ENCODE measurements at regions of chr4 and their contacts with region 1.

Region 1: GRCh38 chr4:40924096-40924792 is 174.5 kb downstream of the NSUN7 start:
- DNase-seq: peak; percentile 81
- ATAC-seq: peak; percentile 86
- H3K4me3 Mint-ChIP-seq: no peak overlapping the region
- H3K27ac Mint-ChIP-seq: peak overlapping the region; percentile 70
- H3K4me1 Mint-ChIP-seq: peaks cover 5% of the 10 kb centered on the region
- H3K27me3 Mint-ChIP-seq: peaks cover 7% of the 10 kb centered on the region

Region 2: DNA sequence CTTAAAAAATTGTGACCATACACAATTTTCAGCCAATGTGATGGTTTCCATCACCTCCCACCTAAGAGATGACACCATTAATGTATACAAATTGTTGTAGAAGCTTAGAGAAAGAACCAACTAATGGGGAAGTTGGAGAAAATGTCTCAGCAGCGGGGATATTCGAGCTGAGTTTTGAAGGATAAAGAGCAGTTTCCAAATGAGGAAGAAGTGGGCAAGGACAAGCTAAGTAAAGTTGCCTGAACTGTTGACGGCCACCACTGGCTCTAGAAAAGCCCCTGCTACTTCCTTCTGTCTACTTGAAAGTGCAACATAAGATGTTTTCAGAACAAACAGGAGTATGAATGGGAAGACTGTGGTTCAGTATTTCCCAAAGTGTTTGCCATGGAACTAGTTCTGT is 497.1 kb before region 1 on chr4:
- CTCF ChIA-PET with region 1: no interaction called
- POLR2A ChIA-PET with region 1: no interaction called
- DNase-seq: no peak
- ATAC-seq: no peak
- H3K4me3 Mint-ChIP-seq: no peak overlapping the region
- H3K27ac Mint-ChIP-seq: no peak overlapping the region
- H3K4me1 Mint-ChIP-seq: peaks cover 13% of the 10 kb centered on the region
- H3K27me3 Mint-ChIP-seq: no peaks in the 10 kb centered on the region

Region 3: GRCh38 chr4:40908702-40909362 is 15.4 kb before region 1 on chr4:
- CTCF ChIA-PET with region 1: interaction called, 110 read pairs
- POLR2A ChIA-PET with region 1: no interaction called
- DNase-seq: peak; percentile 81
- ATAC-seq: peak; percentile 87
- H3K4me3 Mint-ChIP-seq: no peak overlapping the region
- H3K27ac Mint-ChIP-seq: no peak overlapping the region
- H3K4me1 Mint-ChIP-seq: peaks cover 14% of the 10 kb centered on the region
- H3K27me3 Mint-ChIP-seq: no peaks in the 10 kb centered on the region

Region 4: DNA sequence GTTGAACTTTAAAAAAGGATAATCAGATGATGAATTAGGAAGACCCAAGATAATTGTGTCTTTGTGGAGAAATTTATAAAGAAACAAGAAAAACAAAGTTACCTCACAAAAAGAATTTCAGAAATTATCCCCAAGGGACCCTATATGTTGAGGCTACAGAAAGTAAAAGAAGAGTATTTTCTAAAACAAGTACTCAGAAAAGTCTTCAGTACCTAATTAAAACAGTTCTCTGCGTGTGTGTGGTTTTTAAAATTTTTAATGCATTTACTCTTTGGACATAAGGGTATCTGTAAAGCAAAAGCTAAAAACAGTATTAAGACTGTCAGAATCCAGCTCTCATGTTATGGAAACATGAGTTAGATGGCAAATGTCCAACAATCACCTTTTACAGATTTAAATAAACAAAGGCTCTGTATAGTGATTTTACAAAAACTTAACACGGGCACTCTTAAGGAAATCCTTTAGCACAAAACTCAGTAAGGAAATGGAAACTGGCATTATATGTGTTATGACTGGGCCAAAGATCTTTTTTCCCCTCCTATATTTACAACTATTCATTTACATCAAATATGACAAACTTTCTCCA is 13.0 kb after region 1 on chr4:
- CTCF ChIA-PET with region 1: interaction called, 30 read pairs
- POLR2A ChIA-PET with region 1: no interaction called
- DNase-seq: no peak
- ATAC-seq: no peak
- H3K4me3 Mint-ChIP-seq: no peak overlapping the region
- H3K27ac Mint-ChIP-seq: no peak overlapping the region
- H3K4me1 Mint-ChIP-seq: no peaks in the 10 kb centered on the region
- H3K27me3 Mint-ChIP-seq: peaks cover 8% of the 10 kb centered on the region

Region 5: GRCh38 chr4:40948014-40948413 is 23.8 kb after region 1 on chr4:
- CTCF ChIA-PET with region 1: no interaction called
- POLR2A ChIA-PET with region 1: no interaction called
- DNase-seq: no peak
- ATAC-seq: no peak
- H3K4me3 Mint-ChIP-seq: no peak overlapping the region
- H3K27ac Mint-ChIP-seq: no peak overlapping the region
- H3K4me1 Mint-ChIP-seq: no peaks in the 10 kb centered on the region
- H3K27me3 Mint-ChIP-seq: no peaks in the 10 kb centered on the region